ENCODE measurements at regions of chr22 and their contacts with region 1.

Region 1: DNA sequence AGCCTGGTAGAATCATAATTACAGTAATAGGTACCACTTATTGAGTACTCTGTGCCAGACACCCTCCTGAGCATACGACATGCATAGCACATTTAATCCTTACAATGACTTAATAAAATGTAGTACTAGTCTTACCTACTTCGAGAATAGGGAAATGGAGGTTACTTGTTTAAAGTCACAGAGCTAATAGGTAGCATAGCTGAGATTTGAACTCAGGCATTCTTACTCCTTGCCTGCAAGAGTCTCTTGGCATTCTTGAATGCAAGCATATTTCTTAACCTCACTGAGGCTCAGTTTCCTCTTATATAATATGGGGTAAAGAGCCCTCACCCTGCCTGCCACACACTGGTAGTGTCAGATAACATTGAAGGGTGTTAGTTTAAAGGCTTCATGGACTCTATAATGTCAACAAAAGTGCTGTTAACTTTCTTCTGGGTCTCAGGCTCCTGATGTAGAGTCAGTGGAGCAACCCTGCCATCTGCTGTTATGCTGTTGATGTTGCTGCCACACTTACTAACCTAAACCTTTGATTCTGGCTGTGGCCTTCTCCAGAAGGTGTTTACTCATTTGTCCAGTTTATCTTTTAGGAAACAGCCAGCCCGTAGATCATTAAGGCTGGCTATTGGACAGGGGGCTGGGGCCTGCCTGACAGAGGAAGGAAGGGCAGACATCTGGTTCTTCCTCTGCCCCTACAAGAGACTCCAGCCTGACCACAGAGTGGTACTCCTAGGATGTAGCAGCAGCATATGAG is 18.9 kb downstream of the LIMK2 start:
- H3K4me3 ChIP-seq: no peak overlapping the region
- H3K27ac ChIP-seq: no peak overlapping the region
- H3K4me1 ChIP-seq: no peaks in the 10 kb centered on the region
- CTCF ChIP-seq: peak; percentile 86

Region 2: DNA sequence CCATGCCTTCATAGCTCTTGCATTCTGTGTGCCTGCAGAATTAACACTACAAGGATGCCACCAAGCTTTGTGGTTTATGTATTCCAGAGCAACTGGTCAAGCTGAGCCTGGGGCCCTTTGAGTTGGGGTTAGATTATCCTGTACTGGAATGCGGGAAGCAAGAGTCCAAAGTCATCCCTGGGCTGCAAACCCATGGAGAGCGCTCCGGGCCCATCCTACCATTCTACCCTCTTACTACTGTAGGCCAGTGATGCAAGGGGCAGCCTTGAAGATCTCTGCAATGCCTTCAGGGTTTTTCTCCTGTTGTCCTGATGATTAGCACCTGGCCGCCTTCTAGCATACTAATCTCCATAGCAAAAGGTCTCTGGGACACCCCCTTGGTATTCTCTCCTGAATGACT is 210.7 kb before region 1 on chr22:
- CTCF ChIA-PET with region 1: no interaction called
- POLR2A ChIA-PET with region 1: no interaction called
- H3K4me3 ChIP-seq: no peak overlapping the region
- H3K27ac ChIP-seq: no peak overlapping the region
- H3K4me1 ChIP-seq: no peaks in the 10 kb centered on the region
- CTCF ChIP-seq: no peak

Region 3: GRCh38 chr22:31218565-31219262 is 12.3 kb before region 1 on chr22:
- CTCF ChIA-PET with region 1: interaction called, 70 read pairs
- POLR2A ChIA-PET with region 1: interaction called, 8 read pairs
- H3K4me3 ChIP-seq: no peak overlapping the region
- H3K27ac ChIP-seq: peak overlapping the region; percentile 65
- H3K4me1 ChIP-seq: peaks cover 31% of the 10 kb centered on the region
- CTCF ChIP-seq: no peak

Region 4: GRCh38 chr22:31241200-31241599 is 10.2 kb after region 1 on chr22:
- CTCF ChIA-PET with region 1: interaction called, 10 read pairs
- POLR2A ChIA-PET with region 1: interaction called, 3 read pairs
- H3K4me3 ChIP-seq: no peak overlapping the region
- H3K27ac ChIP-seq: no peak overlapping the region
- H3K4me1 ChIP-seq: no peaks in the 10 kb centered on the region; the same call in 1 of the 2 replicates
- CTCF ChIP-seq: no peak

Measured in HEK293 (cell line).